CD8-positive, alpha-beta memory T cell (primary cell): ENCODE measurements at regions of chr22 and their contacts with region 1.

Region 1: DNA sequence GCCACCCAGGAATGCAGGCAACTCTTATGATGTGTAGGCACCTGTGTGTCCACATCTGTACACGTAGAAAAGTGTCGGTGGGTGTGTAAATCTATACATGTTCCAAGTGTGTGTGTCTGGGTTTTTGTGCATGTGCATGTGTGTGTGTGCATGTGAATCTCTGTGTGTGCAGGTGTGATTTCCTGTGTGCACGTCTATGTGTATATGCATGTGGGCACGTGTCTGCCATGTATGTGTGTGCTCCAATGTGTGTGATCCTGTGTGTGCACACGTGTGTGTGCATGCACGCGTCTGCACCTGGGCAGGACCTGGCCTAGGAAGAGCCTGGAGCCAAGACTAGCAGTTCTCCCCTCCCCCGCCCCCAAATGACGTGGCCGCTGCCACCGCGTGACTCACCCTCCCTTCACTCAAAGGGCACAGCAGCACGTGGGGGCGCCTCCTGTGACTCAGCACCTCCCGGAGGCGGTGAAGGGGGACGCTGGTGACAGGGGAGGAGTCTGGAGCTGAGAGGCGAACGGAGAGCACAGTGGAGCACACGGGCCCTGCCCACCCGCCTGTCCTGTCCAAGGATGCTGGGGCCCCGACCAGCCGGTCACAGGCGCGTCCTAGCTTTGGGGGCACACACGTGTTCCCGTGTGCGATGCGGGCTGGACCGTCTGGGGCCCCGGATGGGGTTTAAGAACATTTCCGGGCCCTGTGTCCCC is 10.1 kb downstream of the PIM3 start:
- DNase-seq: peak; percentile 85 to 98 (median 93)
- H3K4me3 ChIP-seq: peak overlapping the region; percentile 63
- H3K4me3 Mint-ChIP-seq: peak overlapping the region; percentile 80 to 91 (median 84)
- H3K27ac ChIP-seq: peak overlapping the region; percentile 60
- H3K27ac Mint-ChIP-seq: peak overlapping the region; percentile 93 to 100 (median 98)
- H3K4me1 ChIP-seq: peaks cover 25% of the 10 kb centered on the region
- H3K4me1 Mint-ChIP-seq: peaks cover 11 to 35% (median 17%) of the 10 kb centered on the region in 3 donors
- H3K27me3 ChIP-seq: no peaks in the 10 kb centered on the region
- H3K27me3 Mint-ChIP-seq: peaks cover 0 to 4% of the 10 kb centered on the region in 2 donors

Region 2: GRCh38 chr22:49960159-49961004 is 10.3 kb before region 1 on chr22 and contains the start of gene PIM3:
- CTCF ChIA-PET with region 1: interaction called, 5 read pairs
- POLR2A ChIA-PET with region 1: interaction called, 30 read pairs
- DNase-seq: peak; percentile 84 to 95 (median 92)
- H3K4me3 ChIP-seq: peak within 1 kb of the TSS; percentile 71
- H3K4me3 Mint-ChIP-seq: peak within 1 kb of the TSS; percentile 86 to 97 (median 93)
- H3K27ac ChIP-seq: peak within 1 kb of the TSS; percentile 79
- H3K27ac Mint-ChIP-seq: peak within 1 kb of the TSS; percentile 91 to 99 (median 93)
- H3K4me1 ChIP-seq: peaks cover 29% of the 10 kb centered on the region
- H3K4me1 Mint-ChIP-seq: peaks cover 8 to 33% (median 19%) of the 10 kb centered on the region in 3 donors
- H3K27me3 ChIP-seq: no peaks in the 10 kb centered on the region
- H3K27me3 Mint-ChIP-seq: peaks cover 0 to 5% of the 10 kb centered on the region in 2 donors
- total RNA-seq, gene PIM3: 202 to 227 TPM